Mammary epithelial cell (primary cell): ENCODE measurements at regions of chr2 and their contacts with region 1.

Region 1: GRCh38 chr2:85148182-85148581 is 15.0 kb downstream of the TCF7L1 start:
- DNase-seq: no peak
- H3K4me3 ChIP-seq: no peak overlapping the region
- H3K27ac ChIP-seq: no peak overlapping the region
- H3K4me1 ChIP-seq: peaks cover 5% of the 10 kb centered on the region
- H3K27me3 ChIP-seq: no peaks in the 10 kb centered on the region
- CTCF ChIP-seq: no peak

Region 2: GRCh38 chr2:84443477-84443876 is 704.7 kb before region 1 on chr2:
- CTCF ChIA-PET with region 1: no interaction called
- dilution Hi-C with region 1: no loop called
- in situ Hi-C with region 1: no loop called
- intact Hi-C with region 1: no loop called
- DNase-seq: no peak
- H3K4me3 ChIP-seq: no peak overlapping the region
- H3K27ac ChIP-seq: no peak overlapping the region
- H3K4me1 ChIP-seq: peaks cover 3% of the 10 kb centered on the region
- H3K27me3 ChIP-seq: no peaks in the 10 kb centered on the region
- CTCF ChIP-seq: no peak

Region 3: GRCh38 chr2:85111819-85112281 is 36.3 kb before region 1 on chr2:
- CTCF ChIA-PET with region 1: no interaction called
- dilution Hi-C with region 1: loop called (anchors 5 kb)
- in situ Hi-C with region 1: no loop called
- intact Hi-C with region 1: no loop called
- DNase-seq: peak; percentile 75
- H3K4me3 ChIP-seq: no peak overlapping the region
- H3K27ac ChIP-seq: no peak overlapping the region
- H3K4me1 ChIP-seq: peaks cover 7% of the 10 kb centered on the region
- H3K27me3 ChIP-seq: no peaks in the 10 kb centered on the region
- CTCF ChIP-seq: no peak